ENCODE measurements at regions of chr5 and their contacts with region 1.

Region 1: DNA sequence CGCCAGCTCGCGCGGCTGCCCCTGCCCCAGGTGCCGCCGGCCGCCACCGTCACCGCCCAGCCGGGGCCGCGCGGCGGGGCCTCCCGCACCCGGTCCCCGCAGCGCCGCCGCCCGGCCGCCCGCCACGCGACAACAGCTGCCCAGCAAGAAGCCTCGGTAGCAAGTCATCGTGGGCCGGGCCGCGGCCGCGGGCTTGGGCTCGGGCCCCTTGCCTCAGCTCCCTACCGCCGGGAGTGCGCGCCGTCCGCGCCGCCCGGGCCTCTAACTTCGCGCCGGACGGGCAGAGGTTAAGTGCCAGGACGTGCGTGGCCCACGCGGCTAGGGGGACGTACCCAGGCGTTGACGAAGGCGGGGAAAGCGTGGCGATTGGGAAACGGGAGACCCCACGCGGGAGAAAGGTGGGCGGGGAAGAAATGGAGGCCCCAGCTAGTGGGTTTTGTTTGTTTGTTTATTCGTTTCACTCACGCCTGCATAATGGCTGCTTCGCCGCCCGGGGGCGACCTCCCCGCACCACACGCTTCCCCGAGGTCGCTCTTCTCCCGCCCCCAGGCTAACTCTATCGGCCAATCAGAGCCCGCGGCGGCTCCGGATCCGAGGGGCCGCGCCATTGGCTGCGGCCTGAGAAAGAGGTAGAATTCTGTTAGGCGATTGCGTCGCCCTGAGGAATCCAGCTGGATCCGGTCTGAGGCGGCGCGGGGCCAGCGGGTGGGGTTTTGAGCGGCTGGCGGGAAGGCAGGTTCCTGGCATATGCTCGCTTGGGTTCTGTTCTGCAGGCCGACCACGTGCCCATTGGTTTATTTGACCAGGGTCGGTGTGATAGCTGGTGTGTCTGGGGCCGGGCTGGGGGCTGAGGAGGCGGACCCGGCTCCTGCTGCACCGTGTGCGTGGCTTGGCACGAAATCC is at the start of gene NADK2:
- DNase-seq: peak; percentile 97 to 99 (median 98)
- ATAC-seq: peak; percentile 89
- H3K4me3 ChIP-seq: peak within 1 kb of the TSS; percentile 83
- H3K27ac ChIP-seq: peak within 1 kb of the TSS; percentile 99
- H3K4me1 ChIP-seq: peaks cover 20 to 39% of the 10 kb centered on the region in 2 experiments
- H3K27me3 ChIP-seq: no peaks in the 10 kb centered on the region
- CTCF ChIP-seq: peak; percentile 80 to 90 (median 87)
- EP300 ChIP-seq: peak; percentile 62
- POLR2A ChIP-seq: peak; percentile 82
- RAD21 ChIP-seq: peak; percentile 53 to 65
- polyA plus RNA-seq, gene NADK2: 10.6 to 11.0 TPM

Region 2: DNA sequence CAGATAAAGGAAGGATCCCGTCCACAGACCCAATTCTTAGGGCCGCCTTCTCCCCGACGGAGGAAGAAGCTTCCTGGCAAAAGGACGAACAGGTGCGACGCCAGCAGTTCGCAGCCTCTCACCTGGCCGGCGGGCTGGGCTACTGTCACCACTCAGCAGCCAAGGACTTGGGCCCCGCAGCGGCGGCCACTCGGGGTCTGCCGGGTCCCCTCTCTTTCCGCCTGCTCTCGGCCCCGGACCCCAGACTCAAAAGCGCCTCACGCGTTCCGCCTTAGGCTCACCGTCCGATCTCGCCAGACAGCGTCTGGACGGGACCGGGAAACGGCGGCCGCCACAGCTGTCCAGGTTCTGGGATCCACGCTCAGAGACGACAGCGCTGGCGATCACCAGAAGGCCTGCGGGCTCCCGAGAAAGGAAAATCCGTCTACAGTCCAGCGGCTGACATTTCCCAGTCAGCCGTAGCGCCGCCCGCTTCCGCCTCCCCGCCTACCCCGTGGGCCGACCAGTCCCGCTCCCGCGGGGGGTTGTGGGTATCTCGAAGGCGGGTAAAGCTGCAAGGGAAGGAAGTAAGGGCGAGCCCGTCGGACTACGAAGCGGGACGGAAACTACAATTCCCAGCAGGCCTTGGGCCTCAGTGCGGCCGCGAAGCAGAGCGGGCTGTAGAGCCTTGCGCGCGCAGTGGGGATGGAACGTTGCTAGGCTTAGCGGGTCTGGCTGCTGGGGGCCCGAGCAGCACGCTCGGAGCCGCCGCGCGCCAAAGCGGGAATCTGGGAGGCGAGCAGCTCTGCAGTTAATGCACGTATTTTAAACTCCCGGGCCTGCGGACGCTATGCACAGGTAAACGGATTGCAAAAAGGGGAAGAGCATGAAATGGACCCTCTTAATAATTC is 90.2 kb before region 1 on chr5 and contains the starts of genes LMBRD2 and SKP2:
- CTCF ChIA-PET with region 1: no interaction called
- POLR2A ChIA-PET with region 1: interaction called, 6 read pairs
- in situ Hi-C with region 1: no loop called
- intact Hi-C with region 1: loop called (anchors 1 kb)
- DNase-seq: peak; percentile 93 to 99 (median 95)
- ATAC-seq: peak; percentile 96
- H3K4me3 ChIP-seq: peak within 1 kb of the TSS; percentile 66
- H3K27ac ChIP-seq: peak within 1 kb of the TSS; percentile 80
- H3K4me1 ChIP-seq: peaks cover 6 to 16% of the 10 kb centered on the region in 2 experiments
- H3K27me3 ChIP-seq: no peaks in the 10 kb centered on the region
- CTCF ChIP-seq: no peak; a peak in 1 of 6 replicates
- EP300 ChIP-seq: peak; percentile 44; the same call in 1 of the 2 replicates
- POLR2A ChIP-seq: peak; percentile 82
- RAD21 ChIP-seq: no peak
- polyA plus RNA-seq, gene LMBRD2: 2.1 to 3.3 TPM
- polyA plus RNA-seq, gene SKP2: 30.0 to 48.3 TPM

Region 3: GRCh38 chr5:36177715-36178523 is 64.0 kb before region 1 on chr5:
- CTCF ChIA-PET with region 1: no interaction called
- POLR2A ChIA-PET with region 1: interaction called, 10 read pairs
- in situ Hi-C with region 1: no loop called
- intact Hi-C with region 1: loop called (anchors 2 kb)
- DNase-seq: peak in 2 of 4 experiments; percentile 17 to 37
- ATAC-seq: peak; percentile 81
- H3K4me3 ChIP-seq: no peak overlapping the region
- H3K27ac ChIP-seq: no peak overlapping the region
- H3K4me1 ChIP-seq: no peaks in the 10 kb centered on the region
- H3K27me3 ChIP-seq: no peaks in the 10 kb centered on the region
- CTCF ChIP-seq: peak; percentile 36 to 65 (median 52); a peak in 5 of 6 replicates
- EP300 ChIP-seq: no peak
- POLR2A ChIP-seq: no peak
- RAD21 ChIP-seq: peak; percentile 43 to 70

Region 4: DNA sequence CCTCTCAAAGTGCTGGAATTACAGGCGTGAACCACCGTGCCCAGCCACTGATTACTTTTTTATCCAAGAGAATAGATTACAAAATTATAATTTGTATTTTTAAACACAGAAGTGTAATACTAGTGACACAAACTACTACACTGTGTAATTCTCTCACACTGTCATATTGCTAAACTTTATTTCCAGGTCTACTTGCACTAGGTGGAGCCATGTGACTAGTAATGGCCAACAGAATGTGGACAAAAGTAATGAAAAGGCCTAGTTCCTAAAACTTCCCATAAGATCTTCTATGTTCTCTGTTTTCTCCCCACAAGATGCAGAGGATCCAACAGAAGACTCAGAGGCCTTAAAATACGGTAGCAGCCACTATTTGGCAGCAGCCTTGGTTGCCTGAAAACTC is 27.4 kb before region 1 on chr5:
- CTCF ChIA-PET with region 1: interaction called, 3 read pairs
- POLR2A ChIA-PET with region 1: interaction called, 13 read pairs
- in situ Hi-C with region 1: no loop called
- intact Hi-C with region 1: no loop called
- DNase-seq: peak in 1 of 4 experiments; percentile 21
- ATAC-seq: peak; percentile 63; the same call in 2 of the 3 replicates
- H3K4me3 ChIP-seq: no peak overlapping the region
- H3K27ac ChIP-seq: no peak overlapping the region
- H3K4me1 ChIP-seq: no peaks in the 10 kb centered on the region
- H3K27me3 ChIP-seq: no peaks in the 10 kb centered on the region
- CTCF ChIP-seq: peak; percentile 8 to 64 (median 24); a peak in 3 of 6 replicates
- EP300 ChIP-seq: no peak
- POLR2A ChIP-seq: no peak
- RAD21 ChIP-seq: peak; percentile 58 to 68

Region 5: DNA sequence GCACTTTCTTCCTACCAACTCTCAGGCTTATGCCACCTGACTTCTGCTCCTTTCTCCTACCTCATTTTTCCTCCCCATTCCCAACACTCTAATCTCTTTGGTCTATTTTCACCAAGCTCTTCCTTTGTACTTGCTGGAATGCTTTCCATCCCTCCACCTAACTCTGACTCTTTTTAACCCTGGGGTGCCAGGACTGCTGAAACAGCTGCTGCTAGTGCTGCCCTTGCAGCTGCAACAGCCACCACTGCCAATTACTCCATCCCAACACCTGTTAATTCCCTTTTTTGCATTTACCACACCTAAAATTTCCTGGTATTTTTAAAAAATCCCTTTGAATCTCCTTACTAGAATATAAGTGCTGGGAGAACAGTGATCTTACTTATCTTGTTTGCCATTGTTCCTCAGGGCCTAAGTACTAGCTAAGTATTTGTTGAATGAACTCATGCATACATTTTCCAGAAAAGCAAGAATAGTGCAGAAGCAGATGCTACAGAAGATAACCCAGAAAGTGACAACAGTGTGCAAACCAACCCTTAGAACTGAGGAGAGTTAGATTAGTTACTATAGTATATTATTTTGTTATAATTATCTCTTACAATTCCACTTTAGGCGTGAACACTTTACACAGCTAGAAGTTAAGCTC is 11.6 kb before region 1 on chr5:
- CTCF ChIA-PET with region 1: no interaction called
- POLR2A ChIA-PET with region 1: interaction called, 71 read pairs
- in situ Hi-C with region 1: no loop called
- intact Hi-C with region 1: no loop called
- DNase-seq: peak in 1 of 4 experiments; percentile 40
- ATAC-seq: peak; percentile 68
- H3K4me3 ChIP-seq: no peak overlapping the region
- H3K27ac ChIP-seq: no peak overlapping the region
- H3K4me1 ChIP-seq: peaks cover 8 to 14% of the 10 kb centered on the region in 2 experiments; a peak in 4 of 5 replicates
- H3K27me3 ChIP-seq: no peaks in the 10 kb centered on the region
- CTCF ChIP-seq: no peak
- EP300 ChIP-seq: no peak
- POLR2A ChIP-seq: no peak
- RAD21 ChIP-seq: no peak

Region 6: GRCh38 chr5:36334315-36334714 is 92.4 kb after region 1 on chr5:
- CTCF ChIA-PET with region 1: no interaction called
- POLR2A ChIA-PET with region 1: no interaction called
- in situ Hi-C with region 1: no loop called
- intact Hi-C with region 1: no loop called
- DNase-seq: no peak
- ATAC-seq: no peak
- H3K4me3 ChIP-seq: no peak overlapping the region
- H3K27ac ChIP-seq: no peak overlapping the region
- H3K4me1 ChIP-seq: no peaks in the 10 kb centered on the region
- H3K27me3 ChIP-seq: peaks cover 13 to 18% of the 10 kb centered on the region in 2 experiments
- CTCF ChIP-seq: no peak
- EP300 ChIP-seq: no peak
- POLR2A ChIP-seq: no peak
- RAD21 ChIP-seq: no peak

Region 7: GRCh38 chr5:36875790-36876388 is 634.0 kb after region 1 on chr5:
- CTCF ChIA-PET with region 1: no interaction called
- POLR2A ChIA-PET with region 1: no interaction called
- in situ Hi-C with region 1: no loop called
- intact Hi-C with region 1: loop called (anchors 10 kb)
- DNase-seq: peak; percentile 72 to 90 (median 78)
- ATAC-seq: peak; percentile 73
- H3K4me3 ChIP-seq: peak overlapping the region; percentile 93
- H3K27ac ChIP-seq: peak overlapping the region; percentile 93
- H3K4me1 ChIP-seq: peaks cover 9 to 10% of the 10 kb centered on the region in 2 experiments; a peak in 4 of 5 replicates
- H3K27me3 ChIP-seq: no peaks in the 10 kb centered on the region
- CTCF ChIP-seq: peak; percentile 71 to 82 (median 82)
- EP300 ChIP-seq: no peak; the same call in 1 of the 2 replicates
- POLR2A ChIP-seq: 0 out of 2 replicates have a peak, but pooled peaks have one; percentile 20
- RAD21 ChIP-seq: peak; percentile 53 to 64; a peak in 3 of 4 replicates